Spleen (tissue), 13 donors: ENCODE measurements at regions of chr2 and their contacts with region 1.

Region 1: DNA sequence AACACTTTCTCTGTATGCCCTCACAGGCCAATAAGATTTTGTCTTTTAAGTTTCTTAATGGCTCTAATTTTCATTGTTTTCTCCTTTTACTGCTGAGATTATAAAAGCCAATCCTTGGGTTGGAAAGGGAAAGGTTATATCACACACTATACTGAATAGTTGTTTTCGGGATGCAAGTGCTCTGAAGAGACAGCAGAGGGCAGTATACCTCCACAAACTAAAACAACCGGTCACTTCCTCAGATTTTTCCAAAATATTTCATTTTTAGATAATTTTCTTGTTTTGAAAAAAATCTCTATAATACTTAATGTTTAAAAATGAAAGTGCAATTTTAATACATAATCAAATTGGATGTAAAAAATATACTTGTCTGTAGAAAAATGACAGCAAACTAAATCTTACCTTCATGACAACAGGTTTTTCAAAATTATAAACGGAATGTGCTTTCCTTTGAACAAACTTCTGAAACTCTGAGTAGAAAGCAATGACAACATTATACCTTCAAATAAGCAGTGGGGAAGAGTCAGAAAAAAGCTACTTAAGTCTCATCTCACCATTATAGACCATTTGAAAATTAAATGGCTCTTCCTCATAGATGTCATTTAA is 82.7 kb downstream of the ORC4 start:
- DNase-seq: no peak
- H3K4me3 ChIP-seq: no peak overlapping the region
- H3K27ac ChIP-seq: no peak overlapping the region
- H3K4me1 ChIP-seq: no peaks in the 10 kb centered on the region
- H3K27me3 ChIP-seq: no peaks in the 10 kb centered on the region
- CTCF ChIP-seq: peak; percentile 51 to 89 (median 79)
- POLR2A ChIP-seq: no peak

Region 2: DNA sequence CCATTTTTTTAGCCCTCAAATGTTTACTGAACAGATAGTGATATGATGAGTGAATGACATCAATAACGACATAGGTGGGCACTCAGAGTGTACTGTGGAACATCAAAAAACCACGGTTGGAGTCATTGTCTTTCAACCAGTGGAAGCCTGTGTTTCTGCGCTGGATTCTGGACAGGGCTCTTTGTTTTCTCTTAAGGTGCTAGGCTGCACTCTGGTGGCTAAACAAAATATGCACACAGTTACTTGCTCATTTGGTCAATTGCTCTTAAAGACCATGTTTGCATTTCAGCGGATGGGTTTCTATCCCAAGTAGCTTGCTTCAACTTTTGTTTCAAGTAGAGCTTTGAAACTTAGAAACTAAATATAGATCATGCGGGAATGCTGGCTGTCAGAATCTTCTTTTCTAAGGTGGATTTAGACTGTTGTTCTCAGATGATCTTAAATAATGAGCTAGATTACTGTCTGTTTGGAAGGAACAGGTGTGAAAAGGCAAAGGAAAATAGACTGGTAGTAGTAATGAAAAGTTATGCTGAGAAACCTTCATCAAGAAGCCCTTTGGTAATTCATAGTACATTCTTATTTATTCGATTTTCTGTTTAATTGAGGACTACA is 1052.1 kb after region 1 on chr2:
- intact Hi-C with region 1: loop called (anchors 5 kb)
- DNase-seq: no peak
- H3K4me3 ChIP-seq: no peak overlapping the region
- H3K27ac ChIP-seq: no peak overlapping the region
- H3K4me1 ChIP-seq: peaks cover 0 to 6% (median 0%) of the 10 kb centered on the region in 6 donors
- H3K27me3 ChIP-seq: no peaks in the 10 kb centered on the region
- CTCF ChIP-seq: peak; percentile 33 to 72 (median 62)
- POLR2A ChIP-seq: no peak